A673 (cell line): ENCODE measurements at regions of chr10 and their contacts with region 1.

Region 1: GRCh38 chr10:24603333-24603732 is 120.4 kb downstream of the ARHGAP21 start:
- DNase-seq: peak; percentile 24
- H3K4me3 ChIP-seq: no peak overlapping the region
- H3K27ac ChIP-seq: no peak overlapping the region
- H3K4me1 ChIP-seq: peaks cover 12% of the 10 kb centered on the region
- H3K27me3 ChIP-seq: no peaks in the 10 kb centered on the region
- CTCF ChIP-seq: no peak

Region 2: DNA sequence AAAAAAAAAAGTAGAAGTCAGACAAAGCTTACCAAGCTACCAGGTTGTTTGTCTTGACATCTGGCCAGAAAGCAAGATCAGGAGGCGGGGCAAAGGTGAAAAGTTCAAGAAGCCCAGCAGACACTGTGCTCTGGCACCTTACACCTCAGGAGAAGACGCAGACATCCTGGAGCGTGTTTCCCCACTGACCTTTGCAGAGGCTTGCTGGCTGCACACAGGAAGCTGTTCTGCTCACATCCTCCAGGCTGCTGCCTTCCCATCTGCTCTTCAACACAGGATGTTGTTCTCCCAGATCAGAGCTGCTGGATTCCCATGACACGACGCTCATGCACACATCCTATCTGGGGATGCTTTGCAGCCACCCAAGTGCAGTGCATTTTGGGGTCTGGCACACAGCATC is 568.8 kb before region 1 on chr10:
- CTCF ChIA-PET with region 1: no interaction called
- POLR2A ChIA-PET with region 1: no interaction called
- intact Hi-C with region 1: no loop called
- DNase-seq: no peak
- H3K4me3 ChIP-seq: no peak overlapping the region
- H3K27ac ChIP-seq: no peak overlapping the region
- H3K4me1 ChIP-seq: no peaks in the 10 kb centered on the region
- H3K27me3 ChIP-seq: no peaks in the 10 kb centered on the region
- CTCF ChIP-seq: no peak

Region 3: GRCh38 chr10:24790599-24790998 is 187.3 kb after region 1 on chr10:
- CTCF ChIA-PET with region 1: no interaction called
- POLR2A ChIA-PET with region 1: no interaction called
- intact Hi-C with region 1: no loop called
- DNase-seq: no peak
- H3K4me3 ChIP-seq: no peak overlapping the region
- H3K27ac ChIP-seq: no peak overlapping the region
- H3K4me1 ChIP-seq: no peaks in the 10 kb centered on the region
- H3K27me3 ChIP-seq: no peaks in the 10 kb centered on the region
- CTCF ChIP-seq: no peak

Region 4: DNA sequence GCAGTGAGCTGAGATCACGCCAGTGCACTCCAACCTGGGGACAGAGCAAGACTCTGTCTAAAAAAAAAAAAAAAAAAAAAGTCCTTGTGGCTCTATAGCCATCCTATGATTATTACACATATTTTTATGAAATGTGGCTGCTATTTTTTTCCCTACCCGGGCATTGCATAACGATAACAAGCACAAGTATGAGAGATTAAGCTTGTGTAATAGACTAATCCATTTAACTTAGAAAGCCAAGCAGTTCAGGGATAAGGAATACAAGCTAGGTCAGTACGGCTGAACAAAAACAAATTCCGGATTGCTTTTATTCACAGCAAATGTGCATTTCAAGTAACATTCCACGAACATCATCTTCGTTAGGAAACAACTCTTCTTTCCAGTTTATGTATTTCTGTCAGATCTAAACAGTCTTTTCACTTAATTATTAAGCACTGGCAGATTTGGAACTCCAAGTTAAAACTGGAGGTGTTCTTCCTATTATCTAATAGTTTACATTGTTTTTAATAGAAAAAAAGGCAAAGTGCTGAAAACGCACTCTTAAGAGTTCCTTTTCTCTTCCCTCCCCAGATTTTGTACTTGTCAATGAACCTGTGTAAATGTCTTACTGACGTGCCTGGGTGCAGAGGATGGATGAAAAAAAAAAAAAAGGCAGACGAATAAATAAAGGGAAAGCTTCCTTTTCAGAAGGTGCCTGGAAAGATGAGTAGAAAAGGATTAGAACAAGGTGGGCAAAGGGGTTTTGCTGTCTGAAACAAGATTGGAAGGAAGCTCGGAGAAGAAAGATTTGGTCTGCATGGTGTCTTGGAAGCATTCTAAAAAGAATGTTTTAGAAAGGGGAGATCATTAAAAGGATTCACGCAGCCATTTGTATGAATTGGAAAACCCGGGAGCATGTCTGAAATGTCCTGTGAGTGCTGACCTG is 267.9 kb after region 1 on chr10:
- CTCF ChIA-PET with region 1: no interaction called
- POLR2A ChIA-PET with region 1: interaction called, 10 read pairs
- intact Hi-C with region 1: no loop called
- DNase-seq: peak; percentile 45
- H3K4me3 ChIP-seq: peak overlapping the region; percentile 5
- H3K27ac ChIP-seq: peak overlapping the region; percentile 65
- H3K4me1 ChIP-seq: peaks cover 43% of the 10 kb centered on the region
- H3K27me3 ChIP-seq: no peaks in the 10 kb centered on the region
- CTCF ChIP-seq: no peak